Gastrocnemius medialis (tissue), 4 donors: ENCODE measurements at regions of chr1 and their contacts with region 1.

Region 1: DNA sequence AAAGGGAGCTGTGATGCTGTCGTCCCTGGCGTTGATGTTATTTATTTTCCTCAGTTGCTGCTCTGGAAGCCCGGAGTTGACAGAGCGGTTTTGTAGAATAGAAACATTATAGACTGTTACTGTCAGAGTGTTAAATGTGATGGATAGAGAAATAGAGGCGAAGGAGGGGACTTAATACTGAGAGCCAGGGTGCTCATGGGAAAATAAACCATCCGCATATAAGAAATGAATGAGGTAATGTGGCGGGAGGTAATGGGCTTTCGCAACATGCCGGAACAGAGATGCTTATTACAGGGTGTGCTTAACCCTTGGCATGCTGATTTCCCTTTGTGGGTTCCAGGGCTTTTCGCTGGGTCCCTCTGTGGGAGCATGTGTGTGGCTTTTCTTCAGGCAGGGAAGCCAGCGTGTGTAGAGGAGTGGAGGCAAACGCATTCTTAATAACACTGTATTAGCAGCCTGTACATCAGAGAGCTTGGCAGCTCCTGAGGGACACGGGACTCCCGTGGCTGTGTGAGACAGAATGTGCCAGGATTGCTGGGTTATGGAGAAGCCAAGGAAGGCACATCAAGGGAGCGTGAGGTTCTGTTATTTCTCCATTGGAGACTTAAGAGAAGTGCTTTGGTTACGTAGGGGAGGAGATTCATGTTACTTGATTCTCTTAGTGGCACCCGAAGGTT is 141.0 kb downstream of the PBX1 start:
- DNase-seq: peak; percentile 84 to 88
- ATAC-seq: peak; percentile 80 to 86
- H3K4me3 ChIP-seq: peak overlapping the region; percentile 29 to 51 (median 41)
- H3K27ac ChIP-seq: peak overlapping the region; percentile 81 to 88 (median 86)
- H3K4me1 ChIP-seq: peaks cover 19 to 64% of the 10 kb centered on the region in 2 donors
- H3K27me3 ChIP-seq: no peaks in the 10 kb centered on the region
- CTCF ChIP-seq: no peak
- POLR2A ChIP-seq: peak; percentile 56 to 64

Region 2: DNA sequence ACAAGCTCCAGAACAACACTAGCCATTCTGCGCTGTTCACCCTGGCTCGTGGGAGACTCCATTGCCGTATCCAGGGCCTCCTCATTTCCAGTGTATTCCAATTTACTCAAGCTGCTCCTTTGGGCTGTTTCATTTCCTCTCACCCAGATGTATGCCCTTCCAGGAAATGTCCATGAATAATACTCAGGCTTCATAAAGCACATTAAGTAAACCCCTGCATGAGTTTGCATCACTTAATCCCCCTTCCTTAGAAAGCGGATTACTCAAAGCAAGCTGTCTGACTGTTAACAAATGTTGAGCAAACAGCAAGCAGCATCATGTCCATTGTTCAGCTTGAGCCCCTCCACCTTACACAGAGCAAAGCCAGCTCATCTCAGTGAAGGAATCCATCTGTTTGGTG is 544.6 kb before region 1 on chr1:
- in situ Hi-C with region 1: no loop called
- intact Hi-C with region 1: no loop called
- DNase-seq: no peak
- ATAC-seq: no peak
- H3K4me3 ChIP-seq: no peak overlapping the region
- H3K27ac ChIP-seq: no peak overlapping the region
- H3K4me1 ChIP-seq: no peaks in the 10 kb centered on the region
- H3K27me3 ChIP-seq: no peaks in the 10 kb centered on the region
- CTCF ChIP-seq: no peak
- POLR2A ChIP-seq: no peak

Region 3: GRCh38 chr1:164673584-164674214 is 26.3 kb before region 1 on chr1:
- in situ Hi-C with region 1: no loop called
- intact Hi-C with region 1: loop called (anchors 1 kb)
- DNase-seq: peak; percentile 90 to 93
- ATAC-seq: peak; percentile 96 to 97
- H3K4me3 ChIP-seq: no peak overlapping the region
- H3K27ac ChIP-seq: peak overlapping the region; percentile 76 to 92 (median 80)
- H3K4me1 ChIP-seq: peaks cover 46 to 50% of the 10 kb centered on the region in 2 donors
- H3K27me3 ChIP-seq: no peaks in the 10 kb centered on the region
- CTCF ChIP-seq: peak; percentile 57 to 93 (median 87)
- POLR2A ChIP-seq: peak; percentile 24 to 49

Region 4: DNA sequence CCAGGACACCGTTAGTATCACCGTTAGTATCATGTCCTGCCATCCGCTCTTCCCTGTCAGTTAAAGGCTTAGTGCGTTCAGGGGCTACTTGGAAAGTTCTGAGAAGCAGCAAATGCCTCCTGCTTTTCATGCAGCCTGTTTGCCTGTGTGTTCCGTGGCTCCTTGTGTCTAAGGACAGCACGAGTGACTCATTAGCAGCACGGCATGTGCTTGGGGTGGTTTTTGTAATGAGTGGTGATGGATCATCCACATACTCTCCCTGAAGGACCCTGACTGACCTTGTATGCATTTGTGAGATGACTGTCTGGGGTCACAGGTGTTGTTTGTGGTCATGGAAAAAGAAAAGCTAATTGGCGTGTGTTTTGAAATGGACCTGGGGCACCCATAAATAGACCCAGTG is 80.9 kb after region 1 on chr1:
- in situ Hi-C with region 1: loop called in 2 of 4 experiments (anchors 10 to 25 kb)
- intact Hi-C with region 1: loop called (anchors 2 kb)
- DNase-seq: peak; percentile 88 to 91
- ATAC-seq: peak; percentile 93 to 97
- H3K4me3 ChIP-seq: no peak overlapping the region
- H3K27ac ChIP-seq: peak overlapping the region; percentile 86 to 93 (median 90)
- H3K4me1 ChIP-seq: peaks cover 54 to 60% of the 10 kb centered on the region in 2 donors
- H3K27me3 ChIP-seq: no peaks in the 10 kb centered on the region
- CTCF ChIP-seq: no peak
- POLR2A ChIP-seq: peak; percentile 69 to 85